Posterior vena cava (tissue), 2 donors: ENCODE measurements at regions of chr7 and their contacts with region 1.

Region 1: DNA sequence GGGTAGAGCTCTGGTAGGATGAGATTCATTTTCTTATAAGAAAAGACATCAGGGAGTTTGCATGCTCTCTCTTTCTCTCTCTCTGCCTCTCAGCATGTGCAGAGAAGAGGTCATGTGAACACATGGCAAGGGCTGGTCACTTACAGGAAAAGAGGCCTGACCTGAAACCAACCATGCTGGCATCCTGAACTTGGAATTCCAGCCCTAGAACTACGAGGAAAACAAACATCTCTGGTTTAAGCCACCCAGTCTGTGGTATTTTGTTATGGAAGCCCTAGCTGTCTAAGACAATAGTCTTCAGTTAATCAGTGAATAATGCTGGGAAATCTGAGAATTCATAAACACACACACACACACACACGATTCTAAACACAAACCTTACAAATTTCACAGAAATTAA is 1104.2 kb upstream of the LRRN3 start:
- DNase-seq: no peak

Region 2: GRCh38 chr7:109964780-109965179 is 21.9 kb before region 1 on chr7:
- intact Hi-C with region 1: loop called in 1 of 2 experiments (anchors 2 kb)
- DNase-seq: no peak